Ovary (tissue), 10 donors: ENCODE measurements at regions of chr3 and their contacts with region 1.

Region 1: GRCh38 chr3:53709860-53710674 is 136.2 kb downstream of the CHDH start:
- DNase-seq: peak; percentile 70 to 82 (median 72)
- H3K4me3 ChIP-seq: no peak overlapping the region
- H3K27ac ChIP-seq: no peak overlapping the region
- H3K4me1 ChIP-seq: no peaks in the 10 kb centered on the region
- H3K27me3 ChIP-seq: no peaks in the 10 kb centered on the region
- CTCF ChIP-seq: peak; percentile 56 to 69 (median 67)
- EP300 ChIP-seq: no peak
- POLR2A ChIP-seq: no peak

Region 2: DNA sequence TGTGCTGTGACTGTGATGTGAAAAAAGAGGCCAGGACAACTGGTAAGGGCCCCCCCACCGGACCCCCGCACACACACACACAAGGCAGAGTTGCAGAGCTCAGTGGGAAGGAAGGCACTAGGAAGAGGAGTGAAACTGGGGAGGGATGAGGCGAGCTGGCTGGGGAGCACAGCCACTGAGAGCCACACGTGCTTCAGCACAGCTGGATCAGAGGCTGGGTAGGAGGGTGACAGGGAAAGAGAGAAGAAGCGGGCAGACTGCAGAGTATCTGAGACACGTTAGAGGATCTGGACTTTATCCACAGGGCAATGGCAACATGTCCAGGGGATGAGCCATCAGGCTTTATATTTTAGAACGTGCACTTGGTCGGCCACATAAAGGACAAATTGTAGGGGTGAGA is 416.2 kb before region 1 on chr3:
- intact Hi-C with region 1: loop called in 2 of 4 experiments (anchors 5 to 10 kb)
- DNase-seq: no peak
- H3K4me3 ChIP-seq: no peak overlapping the region
- H3K27ac ChIP-seq: no peak overlapping the region
- H3K4me1 ChIP-seq: no peaks in the 10 kb centered on the region
- H3K27me3 ChIP-seq: no peaks in the 10 kb centered on the region
- CTCF ChIP-seq: no peak
- EP300 ChIP-seq: no peak
- POLR2A ChIP-seq: no peak

Region 3: GRCh38 chr3:53303957-53304356 is 406.1 kb before region 1 on chr3:
- intact Hi-C with region 1: loop called (anchors 2 to 10 kb)
- DNase-seq: peak in 1 of 5 donors; percentile 17
- H3K4me3 ChIP-seq: no peak overlapping the region
- H3K27ac ChIP-seq: no peak overlapping the region
- H3K4me1 ChIP-seq: no peaks in the 10 kb centered on the region
- H3K27me3 ChIP-seq: no peaks in the 10 kb centered on the region
- CTCF ChIP-seq: no peak
- EP300 ChIP-seq: no peak
- POLR2A ChIP-seq: no peak

Region 4: GRCh38 chr3:53375019-53375418 is 335.0 kb before region 1 on chr3:
- intact Hi-C with region 1: loop called in 1 of 4 experiments (anchors 10 kb)
- DNase-seq: peak; percentile 28 to 60 (median 37)
- H3K4me3 ChIP-seq: no peak overlapping the region
- H3K27ac ChIP-seq: no peak overlapping the region
- H3K4me1 ChIP-seq: no peaks in the 10 kb centered on the region
- H3K27me3 ChIP-seq: no peaks in the 10 kb centered on the region
- CTCF ChIP-seq: no peak
- EP300 ChIP-seq: no peak
- POLR2A ChIP-seq: no peak

Region 5: GRCh38 chr3:53812434-53812833 is 102.4 kb after region 1 on chr3:
- intact Hi-C with region 1: no loop called
- DNase-seq: no peak
- H3K4me3 ChIP-seq: no peak overlapping the region
- H3K27ac ChIP-seq: no peak overlapping the region
- H3K4me1 ChIP-seq: no peaks in the 10 kb centered on the region
- H3K27me3 ChIP-seq: no peaks in the 10 kb centered on the region
- CTCF ChIP-seq: no peak
- EP300 ChIP-seq: no peak
- POLR2A ChIP-seq: no peak